ENCODE measurements at regions of chr7 and their contacts with region 1.

Region 1: DNA sequence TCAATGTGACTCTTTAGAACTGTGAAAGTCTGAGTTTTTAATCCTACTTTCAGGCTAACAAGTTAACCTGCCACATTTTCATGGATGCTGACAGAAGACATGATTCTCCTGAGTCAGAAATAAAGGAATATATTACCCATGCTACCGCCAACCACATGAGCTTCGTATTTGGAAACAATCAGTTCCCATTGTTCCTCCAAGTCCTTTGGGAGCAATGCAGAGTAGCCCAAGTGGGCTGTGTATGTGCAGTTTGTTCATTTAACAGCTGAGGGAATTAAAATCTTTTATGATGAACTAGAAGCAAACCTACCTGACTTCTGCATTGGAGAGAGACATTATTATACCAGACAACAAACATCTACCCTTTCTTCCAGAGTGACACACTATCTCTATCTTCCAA is 169.3 kb upstream of the BET1 start:
- DNase-seq: no peak
- ATAC-seq: no peak
- H3K4me3 ChIP-seq: no peak overlapping the region
- H3K27ac ChIP-seq: no peak overlapping the region
- H3K4me1 ChIP-seq: no peaks in the 10 kb centered on the region; the same call in 1 of the 2 replicates
- H3K27me3 ChIP-seq: no peaks in the 10 kb centered on the region
- CTCF ChIP-seq: no peak
- POLR2A ChIP-seq: no peak
- RAD21 ChIP-seq: no peak

Region 2: GRCh38 chr7:94154858-94155257 is 18.6 kb before region 1 on chr7:
- CTCF ChIA-PET with region 1: no interaction called
- POLR2A ChIA-PET with region 1: no interaction called
- dilution Hi-C with region 1: no loop called
- in situ Hi-C with region 1: no loop called
- intact Hi-C with region 1: loop called (anchors 2 kb)
- DNase-seq: peak; percentile 15
- ATAC-seq: no peak
- H3K4me3 ChIP-seq: no peak overlapping the region
- H3K27ac ChIP-seq: no peak overlapping the region
- H3K4me1 ChIP-seq: peaks cover 4% of the 10 kb centered on the region
- H3K27me3 ChIP-seq: no peaks in the 10 kb centered on the region
- CTCF ChIP-seq: no peak
- POLR2A ChIP-seq: no peak
- RAD21 ChIP-seq: no peak